AG04449 (cell line): ENCODE measurements at regions of chr1 and their contacts with region 1.

Region 1: DNA sequence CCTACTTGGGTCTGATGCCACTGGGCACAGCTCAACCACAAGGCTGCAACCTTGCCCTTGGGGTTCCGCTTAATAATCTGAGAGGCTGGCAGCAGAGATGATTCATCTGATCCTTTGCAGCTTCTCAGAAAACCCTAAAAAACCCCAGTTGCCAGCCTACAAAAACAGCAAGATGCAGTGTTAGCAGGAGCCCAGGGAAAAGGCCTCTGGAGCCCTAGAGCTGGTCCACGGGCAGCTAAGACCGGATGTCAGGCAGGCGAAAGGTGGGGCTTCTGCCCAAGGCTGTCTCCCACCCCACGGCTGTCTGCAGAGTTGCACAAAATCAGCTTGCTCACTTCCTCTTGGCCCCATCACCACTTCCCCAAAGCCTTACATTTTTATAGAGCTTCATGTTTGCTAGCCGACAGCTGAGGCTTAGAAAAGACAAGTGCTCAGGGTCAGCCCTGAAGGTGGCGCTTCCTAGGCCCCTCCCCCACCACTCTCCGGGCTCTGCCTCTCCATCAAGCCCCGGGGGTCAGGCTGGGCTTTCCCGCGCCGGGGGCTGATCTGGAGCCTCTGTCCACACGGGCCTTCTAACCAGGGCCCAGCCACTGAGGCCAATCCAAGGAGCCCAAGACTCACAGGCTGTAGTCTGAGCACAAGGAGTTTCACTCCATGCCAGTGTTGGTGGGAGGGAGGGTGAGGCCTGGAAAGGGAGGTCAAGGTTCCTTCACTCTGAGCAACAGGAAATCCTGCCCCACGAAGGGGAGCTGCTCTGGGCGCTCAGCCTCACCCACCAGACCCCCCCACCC is 4.2 kb upstream of the ADORA3 start:
- DNase-seq: no peak
- H3K4me3 ChIP-seq: peak overlapping the region; percentile 36
- CTCF ChIP-seq: peak; percentile 45

Region 2: DNA sequence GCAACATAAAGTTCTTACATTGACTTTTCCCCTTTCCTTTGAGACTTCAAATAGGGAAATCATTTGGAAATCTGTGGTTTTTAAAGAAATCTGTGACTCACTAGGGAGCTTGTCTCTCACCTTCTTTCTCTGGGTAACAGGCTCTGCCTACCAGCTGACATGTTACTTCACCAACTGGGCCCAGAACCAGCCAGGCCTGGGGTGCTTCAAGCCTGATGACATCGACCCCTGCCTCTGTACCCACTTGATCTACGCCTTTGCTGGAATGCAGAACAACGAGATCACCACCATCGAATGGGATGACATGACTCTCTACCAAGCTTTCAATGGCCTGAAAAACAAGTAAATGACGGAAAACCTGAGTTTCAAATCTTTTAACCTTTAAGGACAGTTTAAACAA is 226.2 kb before region 1 on chr1:
- CTCF ChIA-PET with region 1: no interaction called
- POLR2A ChIA-PET with region 1: no interaction called
- DNase-seq: no peak
- H3K4me3 ChIP-seq: no peak overlapping the region
- CTCF ChIP-seq: no peak

Region 3: DNA sequence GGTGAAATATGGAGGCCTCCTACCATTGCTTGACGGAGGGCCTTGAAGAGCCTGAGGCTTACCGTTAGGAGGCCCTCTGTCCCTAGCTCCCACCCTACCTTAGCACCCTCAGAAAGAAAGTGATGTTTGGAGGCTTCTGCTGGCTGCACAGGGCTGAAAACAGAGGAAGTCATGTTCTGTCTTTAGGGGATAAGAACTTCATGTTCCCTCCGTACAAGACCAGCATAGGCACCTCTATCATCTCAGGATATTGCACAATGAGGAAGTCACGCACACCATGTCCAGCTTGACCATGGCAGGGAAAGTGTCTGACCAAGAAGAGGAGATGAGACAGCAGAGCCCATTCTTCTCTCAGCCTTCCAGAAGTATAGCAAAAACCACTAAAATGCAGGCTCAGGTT is 18.0 kb before region 1 on chr1:
- CTCF ChIA-PET with region 1: interaction called, 72 read pairs
- POLR2A ChIA-PET with region 1: no interaction called
- DNase-seq: no peak
- H3K4me3 ChIP-seq: no peak overlapping the region
- CTCF ChIP-seq: no peak

Region 4: GRCh38 chr1:111570781-111571181 is 63.2 kb after region 1 on chr1:
- CTCF ChIA-PET with region 1: interaction called, 11 read pairs
- POLR2A ChIA-PET with region 1: interaction called, 4 read pairs
- DNase-seq: no peak
- H3K4me3 ChIP-seq: no peak overlapping the region
- CTCF ChIP-seq: no peak

Region 5: GRCh38 chr1:111639602-111640198 is 132.1 kb after region 1 on chr1:
- CTCF ChIA-PET with region 1: interaction called, 26 read pairs
- POLR2A ChIA-PET with region 1: no interaction called
- DNase-seq: no peak
- H3K4me3 ChIP-seq: no peak overlapping the region
- CTCF ChIP-seq: no peak

Region 6: DNA sequence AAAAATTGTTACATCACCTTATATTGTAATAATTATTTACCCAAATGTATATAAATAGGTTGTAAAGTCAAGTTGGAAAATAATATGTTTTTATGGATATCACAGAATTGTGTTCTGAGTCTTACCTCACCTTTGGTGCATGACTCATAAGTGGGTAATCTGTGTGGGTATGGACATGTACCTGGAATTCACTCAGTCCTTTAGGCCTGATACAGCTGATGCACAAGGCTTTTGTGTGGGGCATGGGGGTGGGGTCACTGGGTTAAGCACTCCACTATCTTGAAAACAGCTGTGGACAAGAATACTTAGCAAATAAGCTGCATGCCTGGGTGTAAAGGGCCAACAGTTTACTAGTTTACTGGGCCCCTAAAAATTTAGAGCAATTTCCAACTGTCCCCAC is 197.2 kb after region 1 on chr1:
- CTCF ChIA-PET with region 1: interaction called, 21 read pairs
- POLR2A ChIA-PET with region 1: no interaction called
- DNase-seq: no peak
- H3K4me3 ChIP-seq: no peak overlapping the region
- CTCF ChIP-seq: no peak

Region 7: DNA sequence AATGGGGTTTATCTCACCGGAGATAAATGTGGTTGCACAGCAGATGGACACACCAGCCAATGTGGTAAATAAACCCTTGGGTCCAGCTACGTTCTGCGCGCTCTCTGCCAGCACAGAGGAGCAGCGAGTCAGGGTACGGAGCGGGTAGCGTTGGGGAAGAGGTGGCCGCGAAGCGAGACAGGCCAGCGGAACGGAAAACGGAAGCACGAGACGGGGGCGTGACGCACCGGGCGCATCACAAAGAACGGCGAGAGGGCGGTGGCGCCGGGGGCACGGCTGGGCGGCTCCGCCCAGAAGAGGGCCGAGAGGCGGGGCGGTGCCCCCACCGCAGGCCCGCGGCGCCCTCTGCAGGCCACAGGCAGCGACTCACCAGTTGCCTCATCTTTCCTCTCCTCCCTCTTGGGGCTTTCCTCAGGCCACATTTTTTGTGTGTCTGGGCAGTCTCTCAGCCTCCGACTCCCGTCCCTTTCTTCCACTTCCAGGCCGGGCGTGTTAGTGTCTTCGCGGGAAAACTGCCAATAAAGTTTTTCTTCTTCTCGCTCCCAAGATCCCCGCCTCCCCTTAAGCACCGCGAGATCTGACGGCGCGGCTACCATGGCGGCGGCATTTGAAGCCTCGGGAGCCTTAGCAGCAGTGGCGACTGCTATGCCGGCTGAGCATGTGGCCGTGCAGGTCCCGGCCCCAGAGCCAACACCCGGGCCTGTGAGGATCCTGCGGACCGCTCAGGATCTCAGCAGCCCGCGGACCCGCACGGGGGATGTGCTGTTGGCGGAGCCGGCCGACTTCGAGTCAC is 247.9 kb after region 1 on chr1 and contains the start of gene DDX20:
- CTCF ChIA-PET with region 1: interaction called, 20 read pairs
- POLR2A ChIA-PET with region 1: interaction called, 8 read pairs
- DNase-seq: peak; percentile 95
- H3K4me3 ChIP-seq: peak within 1 kb of the TSS; percentile 91
- CTCF ChIP-seq: peak; percentile 85